ENCODE measurements at regions of chr6 and their contacts with region 1.

Region 1: GRCh38 chr6:20279608-20280287 is 67.5 kb upstream of the MBOAT1 start:
- DNase-seq: no peak
- H3K4me3 ChIP-seq: no peak overlapping the region
- CTCF ChIP-seq: no peak

Region 2: GRCh38 chr6:20291764-20292580 is 12.2 kb after region 1 on chr6:
- CTCF ChIA-PET with region 1: interaction called, 12 read pairs
- POLR2A ChIA-PET with region 1: no interaction called
- DNase-seq: peak; percentile 52
- H3K4me3 ChIP-seq: no peak overlapping the region
- CTCF ChIP-seq: peak; percentile 87